Activated CD8-positive, alpha-beta T cell treated with anti-CD3 and anti-CD28 coated beads for 36 hours (primary cell): ENCODE measurements at regions of chr13 and their contacts with region 1.

Region 1: GRCh38 chr13:113275387-113275786 is 21.7 kb upstream of the LAMP1 start:
- DNase-seq: peak; percentile 63
- ATAC-seq: peak; percentile 83
- H3K4me3 Mint-ChIP-seq: no peak overlapping the region
- H3K27ac Mint-ChIP-seq: no peak overlapping the region
- H3K4me1 Mint-ChIP-seq: peaks cover 3% of the 10 kb centered on the region
- H3K27me3 Mint-ChIP-seq: peaks cover 1% of the 10 kb centered on the region
- CTCF ChIP-seq: peak; percentile 60

Region 2: GRCh38 chr13:113260996-113261395 is 14.4 kb before region 1 on chr13:
- CTCF ChIA-PET with region 1: no interaction called
- POLR2A ChIA-PET with region 1: no interaction called
- intact Hi-C with region 1: no loop called
- DNase-seq: no peak
- ATAC-seq: no peak
- H3K4me3 Mint-ChIP-seq: no peak overlapping the region
- H3K27ac Mint-ChIP-seq: no peak overlapping the region
- H3K4me1 Mint-ChIP-seq: no peaks in the 10 kb centered on the region
- H3K27me3 Mint-ChIP-seq: no peaks in the 10 kb centered on the region
- CTCF ChIP-seq: no peak

Region 3: GRCh38 chr13:113393563-113394338 is 118.4 kb after region 1 on chr13:
- CTCF ChIA-PET with region 1: interaction called, 8 read pairs
- POLR2A ChIA-PET with region 1: no interaction called
- intact Hi-C with region 1: loop called (anchors 2 kb)
- DNase-seq: peak; percentile 89
- ATAC-seq: peak; percentile 94
- H3K4me3 Mint-ChIP-seq: peak overlapping the region; percentile 89
- H3K27ac Mint-ChIP-seq: peak overlapping the region; percentile 70
- H3K4me1 Mint-ChIP-seq: peaks cover 4% of the 10 kb centered on the region
- H3K27me3 Mint-ChIP-seq: no peaks in the 10 kb centered on the region
- CTCF ChIP-seq: peak; percentile 85

Region 4: GRCh38 chr13:113584205-113584869 is 308.9 kb after region 1 on chr13 and contains the start of gene TFDP1:
- CTCF ChIA-PET with region 1: no interaction called
- POLR2A ChIA-PET with region 1: no interaction called
- intact Hi-C with region 1: no loop called
- DNase-seq: peak; percentile 88
- ATAC-seq: peak; percentile 93
- H3K4me3 Mint-ChIP-seq: peak within 1 kb of the TSS; percentile 87
- H3K27ac Mint-ChIP-seq: peak within 1 kb of the TSS; percentile 86
- H3K4me1 Mint-ChIP-seq: peaks cover 36% of the 10 kb centered on the region
- H3K27me3 Mint-ChIP-seq: no peaks in the 10 kb centered on the region
- CTCF ChIP-seq: no peak
- total RNA-seq, gene TFDP1: 174 to 184 TPM